Mammary epithelial cell (primary cell): ENCODE measurements at regions of chr21 and their contacts with region 1.

Region 1: GRCh38 chr21:44370027-44370735 is 16.8 kb downstream of the TRPM2 start:
- DNase-seq: peak; percentile 78
- H3K4me3 ChIP-seq: no peak overlapping the region
- H3K27ac ChIP-seq: no peak overlapping the region
- H3K4me1 ChIP-seq: peaks cover 7% of the 10 kb centered on the region
- H3K27me3 ChIP-seq: peaks cover 2% of the 10 kb centered on the region
- CTCF ChIP-seq: no peak

Region 2: GRCh38 chr21:44414291-44415072 is 44.3 kb after region 1 on chr21:
- CTCF ChIA-PET with region 1: no interaction called
- dilution Hi-C with region 1: loop called (anchors 5 kb)
- in situ Hi-C with region 1: no loop called
- intact Hi-C with region 1: no loop called
- DNase-seq: no peak
- H3K4me3 ChIP-seq: no peak overlapping the region
- H3K27ac ChIP-seq: no peak overlapping the region
- H3K4me1 ChIP-seq: no peaks in the 10 kb centered on the region
- H3K27me3 ChIP-seq: no peaks in the 10 kb centered on the region
- CTCF ChIP-seq: no peak

Region 3: GRCh38 chr21:44444286-44444931 is 74.2 kb after region 1 on chr21:
- CTCF ChIA-PET with region 1: no interaction called
- dilution Hi-C with region 1: no loop called
- in situ Hi-C with region 1: no loop called
- intact Hi-C with region 1: no loop called
- DNase-seq: no peak
- H3K4me3 ChIP-seq: no peak overlapping the region
- H3K27ac ChIP-seq: no peak overlapping the region
- H3K4me1 ChIP-seq: no peaks in the 10 kb centered on the region
- H3K27me3 ChIP-seq: peaks cover 2% of the 10 kb centered on the region
- CTCF ChIP-seq: no peak

Region 4: GRCh38 chr21:44454747-44455523 is 84.8 kb after region 1 on chr21 and contains the start of gene LRRC3:
- CTCF ChIA-PET with region 1: no interaction called
- dilution Hi-C with region 1: loop called (anchors 5 kb)
- in situ Hi-C with region 1: no loop called
- intact Hi-C with region 1: no loop called
- DNase-seq: peak; percentile 65
- H3K4me3 ChIP-seq: peak within 1 kb of the TSS; percentile 56 to 68 (median 58)
- H3K27ac ChIP-seq: no peak within 1 kb of the TSS
- H3K4me1 ChIP-seq: peaks cover 5% of the 10 kb centered on the region
- H3K27me3 ChIP-seq: peaks cover 3% of the 10 kb centered on the region
- CTCF ChIP-seq: no peak
- total RNA-seq, gene LRRC3: 2.3 to 3.5 TPM

Region 5: DNA sequence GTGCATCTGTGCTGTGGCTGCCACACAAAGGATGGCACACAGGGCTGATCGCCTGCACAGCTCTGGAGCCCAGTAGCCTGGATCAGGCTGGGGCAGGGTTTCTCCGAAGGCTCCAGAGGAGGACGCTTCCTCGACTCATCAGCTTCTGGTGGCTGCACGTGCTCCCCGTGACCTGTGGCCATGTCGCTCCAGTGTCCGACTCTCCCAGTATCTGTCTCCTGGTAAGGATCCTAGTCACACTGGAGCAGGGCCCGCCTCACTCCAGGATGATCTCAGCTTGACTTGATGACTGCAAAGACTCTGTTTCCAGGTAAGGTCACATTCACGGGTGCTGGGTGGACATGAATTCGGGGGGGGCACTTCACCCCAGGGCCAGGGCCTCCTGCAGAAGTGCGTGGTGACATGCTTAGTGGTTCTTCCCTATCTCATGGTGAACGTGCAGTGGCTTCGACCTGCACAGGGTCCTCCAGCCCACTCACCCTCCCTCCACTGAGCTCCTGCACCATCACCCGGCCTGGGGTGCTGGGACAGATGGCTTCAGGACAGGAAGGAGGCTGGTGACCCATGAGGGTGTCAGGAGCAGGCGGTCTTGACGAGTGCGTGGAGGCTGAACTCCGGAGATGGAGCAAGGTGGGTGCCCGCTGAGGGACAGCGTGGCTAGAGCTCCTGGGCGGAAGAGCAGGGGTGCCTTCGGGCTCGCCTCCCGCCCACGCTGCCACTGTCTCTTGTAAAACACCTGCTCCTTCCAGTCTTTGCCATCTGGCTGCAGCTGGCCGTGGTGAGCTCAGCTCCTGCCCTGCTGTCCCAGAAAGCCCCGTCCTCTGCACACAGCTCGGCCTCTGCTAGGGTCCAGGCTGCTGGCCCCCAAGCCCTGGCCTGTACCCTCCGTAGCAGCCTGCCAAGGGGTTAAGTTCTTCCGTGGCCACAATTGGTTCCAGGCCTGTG is 161.3 kb after region 1 on chr21:
- CTCF ChIA-PET with region 1: no interaction called
- dilution Hi-C with region 1: no loop called
- in situ Hi-C with region 1: no loop called
- intact Hi-C with region 1: no loop called
- DNase-seq: no peak
- H3K4me3 ChIP-seq: no peak overlapping the region
- H3K27ac ChIP-seq: no peak overlapping the region
- H3K4me1 ChIP-seq: no peaks in the 10 kb centered on the region
- H3K27me3 ChIP-seq: no peaks in the 10 kb centered on the region
- CTCF ChIP-seq: no peak